ENCODE measurements at regions of chr7 and their contacts with region 1.

Region 1: DNA sequence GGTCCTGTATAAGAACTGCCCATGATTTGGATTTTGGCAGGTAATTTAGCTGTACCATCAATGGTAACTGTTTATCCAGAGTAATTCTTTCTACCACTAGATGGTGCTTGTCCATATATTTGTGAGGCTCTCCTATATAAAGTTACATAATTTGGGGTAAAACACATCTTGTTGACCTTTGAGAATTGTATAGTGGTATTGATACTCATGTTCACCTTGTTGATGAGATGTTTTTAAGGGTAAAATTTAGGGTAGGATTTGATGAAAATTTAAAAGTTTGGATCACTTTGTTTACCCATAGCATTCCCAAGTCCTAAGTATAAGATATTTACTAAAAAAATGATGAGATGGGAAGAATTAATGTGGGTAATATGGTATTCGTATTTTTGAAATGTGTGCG is 31.6 kb downstream of the ST7 start:
- DNase-seq: peak; percentile 62
- ATAC-seq: peak; percentile 55
- H3K4me3 ChIP-seq: no peak overlapping the region
- H3K27ac ChIP-seq: no peak overlapping the region
- H3K4me1 ChIP-seq: peaks cover 21% of the 10 kb centered on the region
- H3K27me3 ChIP-seq: no peaks in the 10 kb centered on the region
- CTCF ChIP-seq: peak; percentile 81

Region 2: DNA sequence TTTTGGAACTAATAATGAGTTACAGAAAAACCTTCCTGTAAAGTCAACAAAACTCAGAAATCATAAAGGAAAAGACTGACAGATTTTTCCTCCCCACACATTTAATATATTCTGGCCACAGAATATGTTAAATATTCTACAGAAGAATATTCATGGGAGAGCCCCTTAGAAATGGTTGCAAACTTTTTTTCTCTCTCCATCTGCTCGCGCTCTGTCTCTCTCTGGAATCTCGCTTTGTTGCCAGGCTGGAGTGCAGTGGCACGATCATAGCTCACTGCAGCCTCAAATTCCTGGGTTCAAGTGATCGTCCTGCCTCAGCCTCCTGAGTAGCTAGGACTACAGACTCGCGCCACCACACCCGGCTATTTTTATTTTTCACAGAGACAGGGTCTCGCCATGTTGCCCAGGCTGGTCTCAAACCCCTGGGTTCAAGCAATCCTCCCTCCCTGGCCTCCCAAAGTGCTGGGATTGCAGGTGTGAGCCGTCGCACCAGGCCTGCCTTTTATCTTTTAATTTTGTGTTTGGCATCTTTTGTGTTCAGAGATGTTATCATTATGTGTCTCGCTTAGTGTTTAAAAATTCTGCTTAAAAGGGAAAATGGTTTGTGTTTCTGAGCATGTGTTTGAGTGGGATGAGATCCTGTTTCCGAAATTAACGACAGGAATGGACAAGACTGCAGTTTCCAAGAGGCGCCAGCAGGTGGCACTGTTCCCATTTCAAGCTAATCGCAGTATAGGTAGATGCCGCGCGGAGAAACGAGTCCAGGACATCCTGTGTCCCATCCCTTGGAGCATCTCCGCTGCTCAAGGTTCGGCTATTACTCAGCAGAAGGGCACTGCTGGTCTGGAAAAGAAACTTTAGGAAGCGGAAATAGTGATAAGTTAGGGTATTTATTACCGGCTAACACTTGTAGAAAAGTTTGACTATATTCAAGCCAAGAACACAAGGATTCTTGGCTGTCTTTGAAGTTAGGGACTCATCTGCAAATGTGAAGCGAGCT is 54.7 kb before region 1 on chr7:
- CTCF ChIA-PET with region 1: interaction called, 3 read pairs
- POLR2A ChIA-PET with region 1: no interaction called
- intact Hi-C with region 1: loop called (anchors 2 kb)
- DNase-seq: peak; percentile 91
- ATAC-seq: peak; percentile 96
- H3K4me3 ChIP-seq: peak overlapping the region; percentile 40; the same call in 1 of the 2 replicates
- H3K27ac ChIP-seq: no peak overlapping the region
- H3K4me1 ChIP-seq: peaks cover 7% of the 10 kb centered on the region; the same call in 1 of the 2 replicates
- H3K27me3 ChIP-seq: no peaks in the 10 kb centered on the region
- CTCF ChIP-seq: peak; percentile 91

Region 3: DNA sequence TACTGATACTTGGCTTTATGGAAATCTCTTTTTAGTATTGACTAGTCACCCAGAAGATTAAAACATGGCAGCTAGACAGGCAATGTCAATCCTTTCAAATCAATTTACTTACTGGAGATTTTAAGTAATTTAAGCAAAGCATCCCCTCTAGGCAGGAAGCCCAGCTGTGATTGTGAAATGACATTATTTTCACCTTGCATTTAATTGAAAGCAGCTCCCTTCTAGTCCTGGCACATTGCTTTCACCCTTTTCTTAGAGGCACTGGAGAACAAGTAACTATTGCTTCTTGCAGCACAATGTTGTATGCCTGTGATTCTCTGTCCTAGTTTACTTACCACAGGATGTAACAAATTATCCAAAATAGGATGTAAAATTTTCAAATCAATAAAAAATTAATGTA is 18.3 kb before region 1 on chr7:
- CTCF ChIA-PET with region 1: no interaction called
- POLR2A ChIA-PET with region 1: no interaction called
- intact Hi-C with region 1: loop called (anchors 2 kb)
- DNase-seq: no peak
- ATAC-seq: no peak
- H3K4me3 ChIP-seq: no peak overlapping the region
- H3K27ac ChIP-seq: no peak overlapping the region
- H3K4me1 ChIP-seq: peaks cover 11% of the 10 kb centered on the region
- H3K27me3 ChIP-seq: no peaks in the 10 kb centered on the region
- CTCF ChIP-seq: no peak

Region 4: DNA sequence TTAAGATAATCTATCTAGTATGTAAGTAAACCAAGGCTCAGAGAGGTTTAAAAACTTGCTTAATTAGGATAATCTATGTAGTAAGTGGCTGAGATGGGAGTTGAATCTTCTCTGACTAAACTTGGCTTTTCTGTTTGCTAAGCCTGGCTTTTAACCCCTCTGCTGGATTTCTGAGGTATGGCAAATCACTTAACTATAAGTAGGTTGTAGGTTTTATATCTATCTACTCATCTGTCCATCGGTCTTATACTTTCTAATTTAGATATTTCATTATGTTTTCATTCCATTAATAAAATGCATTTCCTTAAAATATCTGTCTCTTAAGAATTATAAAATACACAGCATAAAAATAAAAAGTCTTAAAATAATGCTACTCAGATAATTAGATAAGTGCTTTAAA is 27.8 kb after region 1 on chr7:
- CTCF ChIA-PET with region 1: interaction called, 5 read pairs
- POLR2A ChIA-PET with region 1: no interaction called
- intact Hi-C with region 1: loop called (anchors 1 kb)
- DNase-seq: peak; percentile 66
- ATAC-seq: peak; percentile 65
- H3K4me3 ChIP-seq: no peak overlapping the region
- H3K27ac ChIP-seq: no peak overlapping the region
- H3K4me1 ChIP-seq: peaks cover 24% of the 10 kb centered on the region
- H3K27me3 ChIP-seq: no peaks in the 10 kb centered on the region
- CTCF ChIP-seq: peak; percentile 55

Region 5: GRCh38 chr7:117119192-117119924 is 134.4 kb after region 1 on chr7:
- CTCF ChIA-PET with region 1: interaction called, 4 read pairs
- POLR2A ChIA-PET with region 1: no interaction called
- intact Hi-C with region 1: loop called (anchors 1 kb)
- DNase-seq: peak; percentile 87
- ATAC-seq: peak; percentile 27
- H3K4me3 ChIP-seq: no peak overlapping the region
- H3K27ac ChIP-seq: no peak overlapping the region
- H3K4me1 ChIP-seq: peaks cover 39% of the 10 kb centered on the region
- H3K27me3 ChIP-seq: no peaks in the 10 kb centered on the region
- CTCF ChIP-seq: peak; percentile 89

Region 6: GRCh38 chr7:117157241-117158209 is 172.6 kb after region 1 on chr7:
- CTCF ChIA-PET with region 1: interaction called, 14 read pairs
- POLR2A ChIA-PET with region 1: no interaction called
- intact Hi-C with region 1: no loop called
- DNase-seq: peak; percentile 93
- ATAC-seq: peak; percentile 89
- H3K4me3 ChIP-seq: no peak overlapping the region
- H3K27ac ChIP-seq: peak overlapping the region; percentile 54
- H3K4me1 ChIP-seq: peaks cover 31% of the 10 kb centered on the region
- H3K27me3 ChIP-seq: no peaks in the 10 kb centered on the region
- CTCF ChIP-seq: peak; percentile 54

Region 7: GRCh38 chr7:117385340-117386109 is 400.6 kb after region 1 on chr7:
- CTCF ChIA-PET with region 1: interaction called, 3 read pairs
- POLR2A ChIA-PET with region 1: no interaction called
- intact Hi-C with region 1: loop called (anchors 5 kb)
- DNase-seq: peak; percentile 51
- ATAC-seq: peak; percentile 84
- H3K4me3 ChIP-seq: no peak overlapping the region
- H3K27ac ChIP-seq: no peak overlapping the region
- H3K4me1 ChIP-seq: no peaks in the 10 kb centered on the region
- H3K27me3 ChIP-seq: peaks cover 16% of the 10 kb centered on the region; the same call in 1 of the 2 replicates
- CTCF ChIP-seq: peak; percentile 72

Measured in PC-3 (cell line).